Activated CD4-positive, alpha-beta T cell treated with anti-CD3 and anti-CD28 coated beads for 36 hours (primary cell): ENCODE measurements at regions of chr9 and their contacts with region 1.

Region 1: DNA sequence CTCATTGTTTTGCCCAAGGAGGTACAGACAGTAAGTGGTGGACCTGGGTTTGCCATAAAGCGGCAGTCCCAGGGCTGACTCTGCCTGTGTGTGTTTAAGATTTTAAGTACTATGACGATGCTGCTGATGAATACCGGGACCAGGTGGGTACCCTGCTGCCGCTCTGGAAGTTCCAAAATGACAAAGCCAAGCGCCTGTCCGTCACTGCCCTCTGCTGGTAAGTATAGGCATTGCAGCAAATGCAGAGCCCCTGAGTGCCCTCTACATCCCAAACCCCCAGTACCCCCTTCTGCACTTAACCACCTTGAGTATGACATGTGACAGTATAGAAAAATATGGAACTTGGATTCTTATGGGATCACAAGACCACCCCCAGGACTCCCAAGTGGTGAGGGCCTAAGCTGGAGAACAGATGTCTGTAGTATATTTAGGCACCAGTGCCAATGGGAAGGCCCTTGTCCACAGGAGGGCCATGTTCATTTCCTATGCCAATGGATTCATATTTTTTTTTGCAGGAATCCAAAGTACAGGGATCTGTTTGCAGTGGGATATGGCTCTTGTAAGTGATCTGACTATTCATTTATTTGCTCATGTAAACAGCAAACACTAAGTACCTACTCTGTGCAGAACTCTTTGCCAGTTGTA is 22.0 kb downstream of the ENHO start:
- DNase-seq: peak; percentile 90
- ATAC-seq: peak; percentile 99
- H3K4me3 Mint-ChIP-seq: no peak overlapping the region
- H3K27ac Mint-ChIP-seq: no peak overlapping the region
- H3K4me1 Mint-ChIP-seq: peaks cover 14% of the 10 kb centered on the region
- H3K27me3 Mint-ChIP-seq: peaks cover 9% of the 10 kb centered on the region

Region 2: DNA sequence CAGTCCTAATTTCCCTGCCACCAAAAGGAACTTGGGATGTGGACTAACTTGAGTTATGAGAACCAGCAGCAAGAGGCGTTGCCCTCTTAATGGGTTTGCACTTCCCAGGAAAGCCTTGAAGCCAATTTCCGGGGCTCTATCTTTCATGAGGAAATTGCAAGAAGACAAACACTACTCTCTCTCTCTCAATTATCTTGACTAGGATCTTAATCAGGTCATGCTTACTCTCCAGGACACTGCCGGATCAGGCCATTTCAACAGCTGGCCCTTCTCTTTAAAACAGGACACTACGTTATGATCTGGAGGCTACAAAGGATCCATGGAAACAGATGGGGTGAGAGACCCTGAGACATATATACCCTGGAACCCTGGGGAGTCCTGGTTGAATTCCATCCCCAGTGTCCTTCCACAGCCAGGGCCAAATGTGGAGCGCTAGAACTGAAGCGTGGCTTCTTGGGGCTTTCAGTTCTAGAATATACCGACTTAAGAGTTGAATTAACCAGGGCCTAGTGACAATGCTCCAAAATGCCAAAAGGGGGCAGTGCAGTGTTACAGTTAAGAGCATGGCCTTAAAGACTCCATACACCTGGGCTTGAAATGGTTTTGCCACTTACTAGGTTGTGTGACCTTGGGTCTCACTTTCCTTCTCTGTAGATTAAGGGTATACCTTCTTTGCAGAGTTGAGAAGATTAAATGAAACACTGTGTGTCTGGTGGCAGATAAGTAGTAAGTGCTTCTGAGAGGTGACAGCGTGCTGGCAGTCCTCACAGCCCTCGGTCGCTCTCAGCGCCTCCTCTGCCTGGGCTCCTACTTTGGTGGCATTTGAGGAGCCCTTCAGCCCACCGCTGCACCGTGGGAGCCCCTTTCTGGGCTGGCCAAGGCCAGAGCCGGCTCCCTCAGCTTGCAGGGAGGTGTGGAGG is 63.5 kb before region 1 on chr9:
- CTCF ChIA-PET with region 1: interaction called, 10 read pairs
- POLR2A ChIA-PET with region 1: no interaction called
- intact Hi-C with region 1: loop called (anchors 1 kb)
- DNase-seq: peak; percentile 77
- ATAC-seq: peak; percentile 96
- H3K4me3 Mint-ChIP-seq: no peak overlapping the region
- H3K27ac Mint-ChIP-seq: no peak overlapping the region
- H3K4me1 Mint-ChIP-seq: peaks cover 9% of the 10 kb centered on the region
- H3K27me3 Mint-ChIP-seq: no peaks in the 10 kb centered on the region

Region 3: DNA sequence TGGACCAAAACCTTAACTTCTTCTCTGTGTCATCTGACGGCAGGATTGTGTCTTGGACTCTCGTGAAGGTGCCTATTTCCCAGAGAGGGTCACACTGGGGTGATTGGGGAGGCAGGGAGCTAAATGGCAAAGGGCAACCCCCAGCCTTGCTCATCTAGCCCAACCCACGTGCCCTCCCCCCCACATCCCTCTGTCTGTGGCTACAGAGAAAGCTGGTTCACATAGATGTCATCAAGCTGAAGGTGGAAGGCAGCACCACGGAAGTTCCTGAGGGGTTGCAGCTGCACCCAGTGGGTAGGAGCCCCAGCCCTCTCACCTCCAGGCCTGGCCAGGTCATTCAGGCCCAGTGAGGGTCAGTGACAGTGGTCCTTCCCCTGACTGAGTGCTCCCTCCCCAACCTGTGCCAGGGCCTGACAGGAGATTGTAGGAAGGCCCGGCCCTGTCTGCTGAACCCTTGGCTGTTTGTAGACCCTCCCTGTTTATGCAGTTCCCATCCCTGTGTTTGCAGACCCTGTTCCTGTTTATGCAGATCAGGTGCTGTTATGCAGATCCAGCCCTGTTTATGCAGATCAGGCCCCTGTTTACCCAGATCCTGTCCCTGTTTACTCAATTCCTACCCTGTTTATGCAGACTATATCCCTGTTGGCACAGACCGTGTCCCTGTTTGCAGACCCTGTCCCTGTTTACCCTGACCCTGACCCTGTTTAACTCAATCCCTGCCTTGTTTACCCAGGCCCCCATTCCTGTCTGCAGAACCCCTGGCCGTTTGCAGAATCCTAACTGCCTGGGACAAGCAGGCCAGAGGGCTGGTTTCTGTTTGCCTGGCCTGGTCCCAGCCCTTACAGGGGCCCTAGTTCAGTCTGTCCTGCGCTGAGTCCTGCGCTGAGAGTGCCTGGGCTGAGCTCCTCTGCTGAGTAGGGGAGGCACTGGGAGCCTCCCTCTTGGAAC is 11.7 kb after region 1 on chr9:
- CTCF ChIA-PET with region 1: interaction called, 14 read pairs
- POLR2A ChIA-PET with region 1: no interaction called
- intact Hi-C with region 1: no loop called
- DNase-seq: no peak
- ATAC-seq: no peak
- H3K4me3 Mint-ChIP-seq: no peak overlapping the region
- H3K27ac Mint-ChIP-seq: no peak overlapping the region
- H3K4me1 Mint-ChIP-seq: no peaks in the 10 kb centered on the region
- H3K27me3 Mint-ChIP-seq: no peaks in the 10 kb centered on the region

Region 4: GRCh38 chr9:34522971-34523797 is 22.4 kb after region 1 on chr9 and contains the start of gene ENHO:
- CTCF ChIA-PET with region 1: interaction called, 3 read pairs
- POLR2A ChIA-PET with region 1: no interaction called
- intact Hi-C with region 1: loop called in 1 of 2 experiments (anchors 1 kb)
- DNase-seq: peak; percentile 93
- ATAC-seq: peak; percentile 99
- H3K4me3 Mint-ChIP-seq: peak within 1 kb of the TSS; percentile 54
- H3K27ac Mint-ChIP-seq: no peak within 1 kb of the TSS
- H3K4me1 Mint-ChIP-seq: peaks cover 24% of the 10 kb centered on the region
- H3K27me3 Mint-ChIP-seq: peaks cover 11% of the 10 kb centered on the region
- total RNA-seq, gene ENHO: not detected

Region 5: GRCh38 chr9:34546834-34547827 is 46.4 kb after region 1 on chr9:
- CTCF ChIA-PET with region 1: interaction called, 3 read pairs
- POLR2A ChIA-PET with region 1: no interaction called
- intact Hi-C with region 1: loop called in 1 of 2 experiments (anchors 2 kb)
- DNase-seq: peak; percentile 84
- ATAC-seq: peak; percentile 84
- H3K4me3 Mint-ChIP-seq: no peak overlapping the region
- H3K27ac Mint-ChIP-seq: no peak overlapping the region
- H3K4me1 Mint-ChIP-seq: no peaks in the 10 kb centered on the region
- H3K27me3 Mint-ChIP-seq: peaks cover 7% of the 10 kb centered on the region

Region 6: GRCh38 chr9:34591248-34591916 is 90.6 kb after region 1 on chr9:
- CTCF ChIA-PET with region 1: interaction called, 3 read pairs
- POLR2A ChIA-PET with region 1: no interaction called
- intact Hi-C with region 1: loop called in 1 of 2 experiments (anchors 5 kb)
- DNase-seq: peak; percentile 89
- ATAC-seq: peak; percentile 76
- H3K4me3 Mint-ChIP-seq: peak overlapping the region; percentile 57
- H3K27ac Mint-ChIP-seq: no peak overlapping the region
- H3K4me1 Mint-ChIP-seq: peaks cover 27% of the 10 kb centered on the region
- H3K27me3 Mint-ChIP-seq: peaks cover 66% of the 10 kb centered on the region

Region 7: DNA sequence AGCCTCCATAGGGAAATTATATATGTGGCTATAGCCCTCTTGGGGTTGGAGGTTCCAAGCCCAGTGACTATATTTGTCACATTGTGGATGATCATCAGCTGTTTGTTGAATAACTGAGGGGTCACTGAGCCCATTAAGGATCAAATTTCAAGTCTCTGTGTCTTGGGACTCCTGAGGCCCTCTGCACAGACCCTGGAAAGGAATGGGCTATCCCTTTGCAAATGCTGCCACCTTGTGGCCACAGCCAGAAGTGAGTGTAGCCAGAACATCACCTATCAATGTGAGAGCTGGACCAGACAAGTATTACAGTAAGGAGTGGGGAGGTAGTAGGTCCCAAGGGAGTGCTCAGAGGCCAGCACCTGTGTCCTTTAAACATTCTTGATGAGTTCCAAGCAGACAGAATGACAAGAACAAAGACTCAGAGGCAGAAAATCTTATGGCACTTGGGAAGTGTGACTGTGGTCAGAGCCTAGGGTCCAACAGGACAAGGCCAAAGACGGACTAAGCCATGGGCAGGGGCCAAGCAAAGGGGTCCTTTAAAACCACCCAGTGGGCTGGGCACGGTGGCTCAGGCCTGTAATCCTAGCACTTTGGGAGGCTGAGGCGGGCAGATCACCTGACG is 103.0 kb after region 1 on chr9:
- CTCF ChIA-PET with region 1: interaction called, 5 read pairs
- POLR2A ChIA-PET with region 1: no interaction called
- intact Hi-C with region 1: loop called in 1 of 2 experiments (anchors 5 kb)
- DNase-seq: peak; percentile 87
- ATAC-seq: peak; percentile 95
- H3K4me3 Mint-ChIP-seq: no peak overlapping the region
- H3K27ac Mint-ChIP-seq: no peak overlapping the region
- H3K4me1 Mint-ChIP-seq: no peaks in the 10 kb centered on the region
- H3K27me3 Mint-ChIP-seq: peaks cover 2% of the 10 kb centered on the region